GM12878 (cell line): ENCODE measurements at regions of chr11 and their contacts with region 1.

Region 1: DNA sequence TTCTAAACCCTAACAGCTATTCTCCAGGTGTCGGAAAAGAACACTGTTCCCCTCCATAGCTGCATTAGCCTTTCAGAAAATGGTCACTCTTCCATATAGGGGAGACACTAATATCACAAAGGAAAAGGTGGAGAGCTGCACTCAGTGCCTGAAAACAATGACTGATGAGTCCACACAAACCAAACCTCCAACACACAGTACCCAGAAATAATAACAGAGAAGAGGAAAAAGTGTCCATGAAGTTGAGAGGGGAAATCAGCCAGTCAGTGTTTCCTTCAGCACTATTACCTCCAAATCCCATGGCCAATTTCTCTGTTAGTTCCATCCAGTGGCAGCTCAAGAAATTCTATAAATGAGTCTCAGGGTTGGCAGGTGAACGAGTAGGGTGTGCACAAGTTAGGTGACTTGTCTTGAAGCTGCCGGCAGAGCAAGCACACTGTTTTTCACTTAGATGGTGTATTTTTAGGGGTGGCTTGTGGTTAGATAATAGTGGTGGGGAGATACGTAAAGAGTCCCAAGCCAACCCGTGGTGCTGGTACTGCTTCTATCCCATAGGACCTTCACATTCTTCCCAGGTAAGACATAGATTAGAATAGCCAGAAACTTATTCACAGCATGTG is 84.5 kb upstream of the CHRM4 start:
- DNase-seq: peak; percentile 28
- ATAC-seq: peak; percentile 73
- H3K4me3 ChIP-seq: no peak overlapping the region
- H3K27ac ChIP-seq: no peak overlapping the region
- H3K4me1 ChIP-seq: peaks cover 15% of the 10 kb centered on the region
- H3K27me3 ChIP-seq: no peaks in the 10 kb centered on the region
- CTCF ChIP-seq: no peak
- EP300 ChIP-seq: no peak
- POLR2A ChIP-seq: no peak
- RAD21 ChIP-seq: no peak

Region 2: DNA sequence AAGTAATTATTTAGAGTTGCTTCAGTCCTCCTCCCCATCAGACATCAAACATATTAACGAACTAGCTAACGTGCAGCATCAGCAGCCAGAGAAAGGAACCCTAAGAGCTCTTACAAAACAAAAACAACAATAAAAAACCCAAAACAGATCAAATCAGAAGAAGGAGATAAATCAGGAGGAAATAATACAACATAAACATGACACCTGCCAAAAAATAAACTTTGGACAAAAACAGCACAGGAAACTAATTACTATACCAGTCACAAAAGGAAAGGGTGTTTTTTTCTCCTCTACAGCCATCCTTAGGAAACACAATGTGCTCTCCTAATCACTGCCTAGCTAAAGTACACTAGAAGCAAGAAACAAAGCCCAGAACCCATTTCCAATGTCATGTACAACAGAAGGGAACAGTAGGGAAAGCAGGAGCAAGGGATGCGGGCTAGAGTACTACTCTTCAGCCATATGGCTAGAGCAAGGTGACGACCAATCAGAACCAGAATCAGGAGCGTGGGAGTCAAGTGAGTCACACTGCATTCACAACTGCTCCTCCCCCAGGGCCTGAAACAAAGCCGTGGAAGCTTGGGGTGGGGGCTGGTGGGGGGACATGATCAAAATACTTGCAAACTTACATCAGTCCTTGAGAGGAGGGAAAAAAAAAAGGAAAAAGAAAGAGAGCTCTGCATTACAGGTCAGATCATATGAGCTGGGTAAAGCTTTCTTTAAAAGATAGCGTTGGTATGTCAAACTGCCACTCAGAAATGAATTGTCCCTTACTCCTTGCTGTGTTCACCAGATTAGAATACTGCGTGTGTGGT is 493.2 kb before region 1 on chr11:
- CTCF ChIA-PET with region 1: no interaction called
- POLR2A ChIA-PET with region 1: no interaction called
- RAD21 ChIA-PET with region 1: no interaction called
- SMC1A ChIA-PET with region 1: no interaction called
- in situ Hi-C with region 1: no loop called
- intact Hi-C with region 1: no loop called
- DNase-seq: no peak
- ATAC-seq: no peak
- H3K4me3 ChIP-seq: no peak overlapping the region
- H3K27ac ChIP-seq: no peak overlapping the region
- H3K4me1 ChIP-seq: no peaks in the 10 kb centered on the region
- H3K27me3 ChIP-seq: no peaks in the 10 kb centered on the region
- CTCF ChIP-seq: no peak
- EP300 ChIP-seq: no peak
- POLR2A ChIP-seq: no peak
- RAD21 ChIP-seq: no peak

Region 3: GRCh38 chr11:46457659-46458424 is 18.2 kb before region 1 on chr11:
- CTCF ChIA-PET with region 1: interaction called, 3 read pairs
- POLR2A ChIA-PET with region 1: interaction called, 23 read pairs
- RAD21 ChIA-PET with region 1: interaction called, 14 read pairs
- SMC1A ChIA-PET with region 1: interaction called, 171 read pairs
- in situ Hi-C with region 1: no loop called
- intact Hi-C with region 1: no loop called
- DNase-seq: no peak
- ATAC-seq: no peak
- H3K4me3 ChIP-seq: no peak overlapping the region
- H3K27ac ChIP-seq: no peak overlapping the region
- H3K4me1 ChIP-seq: no peaks in the 10 kb centered on the region
- H3K27me3 ChIP-seq: no peaks in the 10 kb centered on the region
- CTCF ChIP-seq: no peak
- EP300 ChIP-seq: no peak
- POLR2A ChIP-seq: no peak
- RAD21 ChIP-seq: no peak

Region 4: GRCh38 chr11:46521961-46522681 is 46.1 kb after region 1 on chr11:
- CTCF ChIA-PET with region 1: interaction called, 5 read pairs
- POLR2A ChIA-PET with region 1: interaction called, 18 read pairs
- RAD21 ChIA-PET with region 1: interaction called, 26 read pairs
- SMC1A ChIA-PET with region 1: interaction called, 63 read pairs
- in situ Hi-C with region 1: no loop called
- intact Hi-C with region 1: no loop called
- DNase-seq: no peak
- ATAC-seq: peak; percentile 77
- H3K4me3 ChIP-seq: no peak overlapping the region
- H3K27ac ChIP-seq: peak overlapping the region; percentile 50
- H3K4me1 ChIP-seq: peaks cover 14% of the 10 kb centered on the region
- H3K27me3 ChIP-seq: no peaks in the 10 kb centered on the region
- CTCF ChIP-seq: peak; percentile 26 to 46 (median 29); a peak in 4 of 6 replicates
- EP300 ChIP-seq: no peak
- POLR2A ChIP-seq: no peak
- RAD21 ChIP-seq: peak; percentile 58